Activated CD8-positive, alpha-beta T cell treated with anti-CD3 and anti-CD28 coated beads for 36 hours (primary cell): ENCODE measurements at regions of chr14 and their contacts with region 1.

Region 1: DNA sequence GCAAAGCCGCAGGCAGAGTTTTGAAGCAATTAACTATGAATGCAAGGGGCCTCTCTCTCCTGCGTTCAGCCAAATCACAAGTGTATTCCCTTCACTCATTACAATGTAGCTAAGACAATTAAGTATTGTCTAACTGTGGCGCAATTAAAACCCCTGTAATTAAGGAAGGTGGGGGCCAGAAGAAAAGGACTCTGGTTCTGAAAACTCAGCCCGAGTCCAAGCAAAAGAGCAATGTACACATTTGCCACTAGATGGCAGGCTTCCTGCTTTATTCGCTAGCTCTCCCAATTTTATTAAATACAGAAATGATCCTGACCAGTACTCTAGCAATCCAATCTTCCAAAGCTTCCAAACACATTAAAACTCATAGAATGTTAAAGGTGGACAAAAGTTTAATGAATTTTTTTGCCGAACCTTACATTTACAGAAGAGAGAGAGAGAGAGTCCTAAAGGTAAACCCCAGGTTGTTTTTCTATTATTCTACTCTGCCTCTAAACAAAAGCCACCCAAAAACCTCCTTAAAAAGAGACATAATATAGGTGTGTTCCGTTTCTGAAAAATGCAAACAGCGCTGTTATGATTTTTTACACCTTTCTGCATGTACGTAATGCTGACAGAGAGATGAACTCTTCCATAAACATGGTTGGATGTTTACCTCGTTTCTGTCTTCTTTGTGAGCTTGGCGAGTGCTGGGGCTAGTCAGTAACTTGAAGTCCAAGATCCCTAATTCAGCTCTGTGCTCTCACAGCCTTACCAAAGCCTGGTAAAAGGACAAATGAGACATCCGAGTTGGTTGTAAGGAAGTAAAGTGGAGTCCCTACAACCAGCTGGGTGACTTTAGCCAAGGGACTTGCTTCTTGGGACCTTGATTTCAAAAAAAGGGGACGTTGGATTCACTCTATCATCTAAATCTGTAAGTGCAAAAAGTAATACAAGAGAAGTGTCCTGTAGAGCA is 50.9 kb upstream of the VASH1 start:
- DNase-seq: peak; percentile 37
- ATAC-seq: no peak
- H3K4me3 Mint-ChIP-seq: no peak overlapping the region
- H3K27ac Mint-ChIP-seq: no peak overlapping the region
- H3K4me1 Mint-ChIP-seq: no peaks in the 10 kb centered on the region
- H3K27me3 Mint-ChIP-seq: peaks cover 7% of the 10 kb centered on the region
- CTCF ChIP-seq: peak; percentile 83

Region 2: GRCh38 chr14:76687611-76688382 is 22.5 kb before region 1 on chr14:
- CTCF ChIA-PET with region 1: interaction called, 16 read pairs
- POLR2A ChIA-PET with region 1: no interaction called
- intact Hi-C with region 1: no loop called
- DNase-seq: no peak
- ATAC-seq: no peak
- H3K4me3 Mint-ChIP-seq: no peak overlapping the region
- H3K27ac Mint-ChIP-seq: no peak overlapping the region
- H3K4me1 Mint-ChIP-seq: no peaks in the 10 kb centered on the region
- H3K27me3 Mint-ChIP-seq: peaks cover 16% of the 10 kb centered on the region
- CTCF ChIP-seq: no peak

Region 3: GRCh38 chr14:76767681-76768656 is 57.6 kb after region 1 on chr14:
- CTCF ChIA-PET with region 1: interaction called, 13 read pairs
- POLR2A ChIA-PET with region 1: no interaction called
- intact Hi-C with region 1: no loop called
- DNase-seq: peak; percentile 79
- ATAC-seq: peak; percentile 99
- H3K4me3 Mint-ChIP-seq: no peak overlapping the region
- H3K27ac Mint-ChIP-seq: peak overlapping the region; percentile 59
- H3K4me1 Mint-ChIP-seq: peaks cover 15% of the 10 kb centered on the region
- H3K27me3 Mint-ChIP-seq: peaks cover 20% of the 10 kb centered on the region
- CTCF ChIP-seq: no peak

Region 4: DNA sequence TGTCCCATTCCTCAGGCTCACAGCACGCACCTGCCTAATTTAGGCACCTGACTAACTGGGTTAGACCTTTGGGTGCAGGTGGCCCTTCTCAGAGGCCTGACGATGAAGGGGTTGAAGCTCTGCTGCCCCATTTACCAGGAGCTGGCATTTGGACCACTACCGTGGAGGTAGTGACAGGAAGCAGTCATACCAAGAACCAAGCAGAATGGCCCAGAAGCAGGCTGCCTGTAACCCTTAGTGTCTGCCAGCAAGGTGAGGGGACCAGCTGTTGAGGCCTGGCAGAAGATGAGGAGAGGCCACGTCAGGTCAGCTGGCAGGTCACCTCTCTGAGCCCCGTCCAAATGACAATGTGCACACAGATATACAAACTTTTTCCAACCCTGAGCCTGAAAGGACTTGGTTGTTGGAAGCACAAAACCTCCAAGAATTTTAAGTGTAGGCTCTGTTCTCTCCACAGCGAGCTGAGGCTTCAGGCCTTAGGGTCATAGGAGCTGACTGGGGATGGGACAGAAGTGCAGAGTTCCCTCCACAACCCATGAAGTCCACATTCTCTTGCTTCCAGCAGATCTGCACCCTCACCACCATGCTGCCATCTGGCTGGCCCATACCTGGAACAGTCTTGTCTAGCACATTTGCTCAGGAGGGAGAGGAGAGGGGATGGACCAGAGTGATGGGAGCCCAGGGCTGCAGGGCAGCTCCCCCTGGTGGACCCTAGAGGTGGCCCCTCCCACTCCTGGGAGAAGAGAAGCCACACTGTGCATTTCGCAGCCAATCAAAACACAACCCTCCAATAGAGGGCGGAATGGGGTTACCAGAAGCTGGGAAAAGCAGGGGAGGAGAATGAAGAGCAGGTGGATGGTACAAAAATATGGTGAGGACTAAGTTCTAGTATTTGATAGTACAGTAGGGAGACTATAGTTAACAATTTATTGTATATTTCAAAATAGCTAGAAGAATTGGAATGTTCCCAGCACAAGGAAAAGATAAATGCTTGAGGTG is 74.2 kb after region 1 on chr14:
- CTCF ChIA-PET with region 1: interaction called, 116 read pairs
- POLR2A ChIA-PET with region 1: no interaction called
- intact Hi-C with region 1: loop called (anchors 10 kb)
- DNase-seq: peak; percentile 75
- ATAC-seq: peak; percentile 91
- H3K4me3 Mint-ChIP-seq: no peak overlapping the region
- H3K27ac Mint-ChIP-seq: no peak overlapping the region
- H3K4me1 Mint-ChIP-seq: peaks cover 24% of the 10 kb centered on the region
- H3K27me3 Mint-ChIP-seq: no peaks in the 10 kb centered on the region
- CTCF ChIP-seq: peak; percentile 74

Region 5: DNA sequence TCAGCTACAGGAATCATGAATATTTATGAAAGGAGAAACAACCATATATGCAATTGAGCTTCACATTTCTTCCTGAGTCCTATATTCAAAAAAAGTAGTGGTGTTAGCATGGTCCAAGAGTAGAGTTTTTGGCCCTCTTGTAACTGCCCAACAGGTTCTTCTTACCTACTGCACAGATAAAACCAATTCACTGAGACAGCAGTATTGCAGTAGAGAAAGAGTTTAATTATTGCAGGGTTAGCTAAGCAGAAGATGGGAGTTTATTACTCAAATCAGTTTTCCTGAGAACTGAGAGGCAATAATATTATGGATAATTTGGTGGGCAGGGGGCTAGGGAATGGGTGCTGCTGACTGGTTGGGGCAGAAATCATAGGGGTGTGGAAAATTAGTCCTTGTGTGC is 381.2 kb after region 1 on chr14:
- CTCF ChIA-PET with region 1: interaction called, 10 read pairs
- POLR2A ChIA-PET with region 1: no interaction called
- intact Hi-C with region 1: no loop called
- DNase-seq: no peak
- ATAC-seq: no peak
- H3K4me3 Mint-ChIP-seq: no peak overlapping the region
- H3K27ac Mint-ChIP-seq: no peak overlapping the region
- H3K4me1 Mint-ChIP-seq: peaks cover 14% of the 10 kb centered on the region
- H3K27me3 Mint-ChIP-seq: no peaks in the 10 kb centered on the region
- CTCF ChIP-seq: no peak